ENCODE measurements at regions of chr16 and their contacts with region 1.

Region 1: DNA sequence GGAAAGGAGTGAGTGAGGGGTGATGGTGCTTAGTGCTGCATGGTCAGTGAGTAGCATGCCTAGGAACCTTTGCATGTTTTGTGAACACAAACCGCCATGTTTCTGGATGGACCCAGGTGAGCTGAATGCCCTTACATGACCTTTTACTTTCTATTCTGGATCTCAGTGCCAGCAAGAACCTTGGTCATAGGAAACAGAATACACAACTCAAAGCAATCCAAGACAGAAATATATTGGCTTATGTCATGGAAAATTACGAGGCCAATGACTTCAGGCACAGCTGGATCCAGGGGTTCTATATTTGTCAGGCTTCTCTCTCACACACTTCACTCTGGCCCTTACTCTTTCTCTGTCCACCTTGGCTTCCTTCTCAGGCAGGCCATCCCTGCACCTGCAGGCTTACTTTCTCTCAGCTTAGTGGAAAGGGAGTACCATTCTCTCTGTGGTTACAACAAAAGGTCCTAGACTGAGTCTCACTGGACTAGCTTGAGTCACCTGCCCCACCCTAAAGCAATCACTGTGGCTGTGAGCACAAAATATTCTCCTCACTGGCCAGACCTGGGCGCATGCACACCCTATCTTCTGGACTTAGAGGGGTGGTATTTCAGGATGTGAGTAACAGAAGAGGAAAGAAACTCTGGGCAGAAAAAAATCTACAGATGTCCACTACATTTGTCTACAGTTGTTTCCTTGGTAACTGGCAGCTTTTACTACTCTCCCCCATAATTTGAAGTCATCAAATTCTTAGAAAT is 20.4 kb upstream of the CPNE2 start:
- DNase-seq: no peak
- H3K4me3 ChIP-seq: no peak overlapping the region
- H3K27ac ChIP-seq: no peak overlapping the region
- H3K4me1 ChIP-seq: no peaks in the 10 kb centered on the region
- H3K27me3 ChIP-seq: no peaks in the 10 kb centered on the region
- CTCF ChIP-seq: no peak
- POLR2A ChIP-seq: no peak

Region 2: DNA sequence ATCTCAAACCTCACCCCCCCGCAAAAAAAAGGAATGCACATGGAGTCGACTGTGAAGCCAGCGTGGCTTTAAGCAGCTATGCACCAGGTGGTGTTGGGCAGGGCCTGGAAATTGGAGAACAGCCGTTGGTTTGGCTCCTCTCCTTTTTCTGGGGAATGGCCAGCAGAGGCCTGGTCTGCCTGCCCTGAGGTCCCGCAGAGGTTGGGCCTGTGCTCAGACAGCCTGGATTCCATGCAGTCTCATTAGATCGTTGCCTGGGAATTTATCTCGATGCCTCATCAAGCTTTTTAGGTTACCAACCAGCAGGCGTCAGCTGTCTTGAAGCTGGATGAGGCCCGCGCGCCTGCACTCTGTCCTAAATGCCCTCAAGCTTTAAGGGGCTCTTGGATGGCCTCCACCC is 197.2 kb before region 1 on chr16:
- intact Hi-C with region 1: loop called (anchors 5 kb)
- DNase-seq: peak in 1 of 2 donors; percentile 74
- H3K4me3 ChIP-seq: no peak overlapping the region
- H3K27ac ChIP-seq: no peak overlapping the region
- H3K4me1 ChIP-seq: no peaks in the 10 kb centered on the region
- H3K27me3 ChIP-seq: no peaks in the 10 kb centered on the region
- CTCF ChIP-seq: peak in 1 of 3 donors; percentile 11
- POLR2A ChIP-seq: no peak

Region 3: GRCh38 chr16:57042157-57043111 is 29.6 kb before region 1 on chr16:
- intact Hi-C with region 1: no loop called
- DNase-seq: no peak
- H3K4me3 ChIP-seq: no peak overlapping the region
- H3K27ac ChIP-seq: peak overlapping the region in 1 of 2 donors; percentile 19
- H3K4me1 ChIP-seq: no peaks in the 10 kb centered on the region
- H3K27me3 ChIP-seq: no peaks in the 10 kb centered on the region
- CTCF ChIP-seq: no peak
- POLR2A ChIP-seq: no peak